ENCODE measurements at regions of chr5 and their contacts with region 1.

Region 1: DNA sequence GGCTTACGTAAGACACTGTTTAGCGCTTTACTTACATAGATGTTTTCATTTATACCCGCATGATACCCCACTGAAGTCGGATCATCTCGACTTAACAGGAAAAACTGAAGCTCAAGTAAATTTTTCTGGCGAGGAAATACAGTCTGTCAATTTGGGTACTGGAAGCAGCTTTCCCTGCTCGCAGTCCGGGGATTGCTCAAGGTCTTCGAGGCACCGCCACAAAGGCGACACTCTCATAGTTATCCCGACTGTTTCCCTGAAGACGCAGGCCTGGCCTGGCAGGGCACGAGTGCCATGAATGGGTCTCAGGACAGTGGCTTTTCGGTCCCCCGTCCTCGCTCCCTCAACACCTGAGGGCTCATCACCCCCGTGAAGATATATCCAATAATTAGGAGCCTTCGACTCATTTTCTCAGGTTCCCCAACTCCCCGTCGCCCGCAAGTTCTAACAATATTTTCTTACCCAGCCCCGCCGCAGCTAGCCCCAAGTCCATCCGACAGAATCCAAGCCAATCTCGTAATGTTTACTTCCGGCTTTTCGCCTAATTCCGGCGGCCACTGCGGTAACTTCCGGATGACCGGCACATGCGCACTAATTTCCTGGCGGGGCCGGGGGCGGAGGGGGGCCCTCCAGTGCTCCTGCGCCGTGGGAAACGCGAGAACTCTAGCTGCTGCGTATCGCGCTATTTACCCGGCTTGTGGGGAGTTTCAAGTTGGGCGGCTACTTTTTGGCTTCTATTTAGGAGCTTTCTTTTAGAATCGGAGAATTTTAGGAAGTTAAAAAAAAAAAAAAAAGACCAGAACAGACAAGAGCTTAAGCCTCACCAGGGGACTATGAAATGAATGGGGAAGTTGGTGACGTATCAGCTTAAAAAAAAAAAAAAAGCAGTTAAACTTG is at the start of gene SLU7:
- DNase-seq: peak; percentile 93

Region 2: GRCh38 chr5:160390787-160391696 is 27.8 kb before region 1 on chr5:
- CTCF ChIA-PET with region 1: no interaction called
- POLR2A ChIA-PET with region 1: interaction called, 11 read pairs
- DNase-seq: no peak

Region 3: GRCh38 chr5:160399402-160400353 is 19.1 kb before region 1 on chr5 and contains the start of gene FAM200C:
- CTCF ChIA-PET with region 1: no interaction called
- POLR2A ChIA-PET with region 1: interaction called, 16 read pairs
- DNase-seq: peak; percentile 99

Region 4: DNA sequence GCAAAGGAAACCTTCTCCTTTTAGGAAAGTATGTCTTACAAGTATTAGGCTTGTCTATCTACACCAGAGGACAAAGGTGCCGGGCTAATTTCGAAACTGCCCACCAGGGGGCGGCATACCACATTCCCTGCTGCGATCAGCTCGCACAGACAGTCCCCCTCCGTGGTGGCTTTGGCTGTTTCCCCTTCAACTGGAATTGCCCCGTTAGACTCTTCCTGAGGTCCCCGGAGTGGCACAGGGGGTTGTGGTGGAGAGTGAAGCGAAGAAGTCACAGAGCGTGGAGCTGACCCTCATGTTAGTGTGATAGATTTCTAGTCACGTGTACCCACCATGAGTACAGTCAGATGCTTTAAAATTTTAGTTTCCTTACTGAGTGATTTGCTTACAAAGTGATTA is 20.4 kb after region 1 on chr5:
- CTCF ChIA-PET with region 1: interaction called, 18 read pairs
- POLR2A ChIA-PET with region 1: interaction called, 6 read pairs
- DNase-seq: peak; percentile 83

Region 5: GRCh38 chr5:160567031-160567705 is 148.4 kb after region 1 on chr5:
- CTCF ChIA-PET with region 1: interaction called, 15 read pairs
- POLR2A ChIA-PET with region 1: no interaction called
- DNase-seq: no peak

Measured in HEK293T (cell line).